Ovary (tissue), 10 donors: ENCODE measurements at regions of chrX and their contacts with region 1.

Region 1: DNA sequence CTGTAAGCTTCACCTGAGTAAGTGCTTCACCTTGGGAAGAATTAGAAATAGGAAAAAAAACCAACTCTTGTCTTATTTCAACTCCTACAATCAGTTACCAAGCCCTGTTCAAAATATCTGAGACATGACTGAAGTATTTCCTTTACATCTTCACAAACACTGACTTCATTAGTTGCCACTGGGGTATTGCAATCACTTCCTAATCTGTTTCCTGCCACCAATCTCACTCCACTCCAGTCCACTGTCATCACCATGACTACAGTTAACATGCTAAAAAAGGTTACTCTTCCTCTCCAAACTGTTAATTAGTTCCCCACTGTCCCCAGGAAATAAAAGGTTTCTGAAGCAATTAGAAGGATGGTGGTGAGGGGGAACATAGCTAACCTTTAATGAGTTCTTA is 3.3 kb upstream of the SUPT20HL1 start:
- DNase-seq: no peak
- H3K4me3 ChIP-seq: no peak overlapping the region
- H3K27ac ChIP-seq: no peak overlapping the region
- H3K4me1 ChIP-seq: no peaks in the 10 kb centered on the region
- H3K27me3 ChIP-seq: no peaks in the 10 kb centered on the region
- CTCF ChIP-seq: no peak
- EP300 ChIP-seq: no peak
- POLR2A ChIP-seq: no peak

Region 2: DNA sequence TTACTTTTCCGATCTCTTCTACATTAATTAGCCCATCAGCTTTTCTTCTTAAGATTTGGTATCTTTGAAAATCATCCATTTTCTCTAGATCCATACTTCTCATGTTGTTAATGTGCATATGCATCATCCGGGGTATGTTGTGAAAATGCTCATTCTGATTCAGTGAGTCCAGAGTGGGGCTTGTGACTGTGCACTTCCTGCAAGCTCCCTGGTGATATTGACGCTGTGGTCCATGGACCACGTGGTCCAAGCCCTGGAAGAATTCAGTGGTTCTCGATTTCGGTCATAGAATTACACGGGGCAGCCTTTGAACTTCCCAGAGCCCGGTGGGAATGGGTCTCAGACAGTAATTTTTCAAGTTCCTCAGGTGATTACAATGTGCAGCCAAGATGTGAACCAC is 137.8 kb before region 1 on chrX:
- intact Hi-C with region 1: no loop called
- DNase-seq: no peak
- H3K4me3 ChIP-seq: no peak overlapping the region
- H3K27ac ChIP-seq: no peak overlapping the region
- H3K4me1 ChIP-seq: no peaks in the 10 kb centered on the region
- H3K27me3 ChIP-seq: no peaks in the 10 kb centered on the region
- CTCF ChIP-seq: no peak
- EP300 ChIP-seq: no peak
- POLR2A ChIP-seq: no peak

Region 3: GRCh38 chrX:24339911-24340310 is 17.2 kb before region 1 on chrX:
- intact Hi-C with region 1: loop called in 1 of 4 experiments (anchors 2 kb)
- DNase-seq: no peak
- H3K4me3 ChIP-seq: no peak overlapping the region
- H3K27ac ChIP-seq: no peak overlapping the region
- H3K4me1 ChIP-seq: no peaks in the 10 kb centered on the region
- H3K27me3 ChIP-seq: no peaks in the 10 kb centered on the region
- CTCF ChIP-seq: no peak
- EP300 ChIP-seq: no peak
- POLR2A ChIP-seq: no peak

Region 4: GRCh38 chrX:24380262-24381187 is 23.4 kb after region 1 on chrX:
- intact Hi-C with region 1: no loop called
- DNase-seq: no peak
- H3K4me3 ChIP-seq: no peak overlapping the region
- H3K27ac ChIP-seq: no peak overlapping the region
- H3K4me1 ChIP-seq: peaks cover 2% of the 10 kb centered on the region
- H3K27me3 ChIP-seq: no peaks in the 10 kb centered on the region
- CTCF ChIP-seq: no peak
- EP300 ChIP-seq: no peak
- POLR2A ChIP-seq: no peak

Region 5: DNA sequence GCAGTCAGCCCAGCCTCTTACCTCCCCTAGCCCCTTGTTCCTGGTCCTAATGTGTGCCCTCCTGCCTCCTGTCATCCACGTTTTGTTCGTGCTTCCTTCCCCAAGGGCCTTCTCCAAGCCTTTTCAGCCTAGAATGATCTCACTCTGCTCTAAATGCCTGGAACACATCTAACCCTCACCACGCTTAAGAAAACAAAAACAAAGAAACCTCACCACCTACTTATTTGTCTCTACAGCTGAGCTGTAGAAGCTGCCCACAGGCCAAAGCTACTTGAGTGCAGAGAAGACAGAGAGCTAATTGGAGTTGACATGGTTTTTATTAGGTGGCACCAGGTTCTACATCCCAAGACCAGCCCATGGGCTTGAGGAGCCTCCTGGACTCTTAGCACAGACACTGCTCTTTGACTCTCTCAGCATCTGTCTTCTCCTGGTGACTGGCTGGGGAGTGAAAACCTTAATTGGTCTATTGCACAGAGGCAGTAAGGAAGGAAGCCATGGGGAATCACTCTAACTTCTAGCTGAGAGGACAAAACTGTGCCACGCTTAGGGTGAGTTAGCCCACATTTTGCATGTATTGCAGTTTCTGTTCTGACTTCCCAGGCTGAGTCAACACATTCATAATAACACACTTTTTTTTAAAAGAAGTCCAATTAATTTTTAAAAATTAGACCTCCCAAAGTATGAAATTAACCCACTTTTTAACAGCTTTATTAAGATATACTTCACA is 55.7 kb after region 1 on chrX:
- intact Hi-C with region 1: no loop called
- DNase-seq: no peak
- H3K4me3 ChIP-seq: no peak overlapping the region
- H3K27ac ChIP-seq: no peak overlapping the region
- H3K4me1 ChIP-seq: no peaks in the 10 kb centered on the region
- H3K27me3 ChIP-seq: no peaks in the 10 kb centered on the region
- CTCF ChIP-seq: no peak
- EP300 ChIP-seq: no peak
- POLR2A ChIP-seq: no peak